A673 (cell line): ENCODE measurements at regions of chr12 and their contacts with region 1.

Region 1: GRCh38 chr12:111942557-111942956 is 70.4 kb downstream of the TMEM116 start:
- DNase-seq: no peak
- H3K4me3 ChIP-seq: no peak overlapping the region
- H3K27ac ChIP-seq: no peak overlapping the region
- H3K4me1 ChIP-seq: no peaks in the 10 kb centered on the region
- H3K27me3 ChIP-seq: no peaks in the 10 kb centered on the region
- CTCF ChIP-seq: no peak

Region 2: DNA sequence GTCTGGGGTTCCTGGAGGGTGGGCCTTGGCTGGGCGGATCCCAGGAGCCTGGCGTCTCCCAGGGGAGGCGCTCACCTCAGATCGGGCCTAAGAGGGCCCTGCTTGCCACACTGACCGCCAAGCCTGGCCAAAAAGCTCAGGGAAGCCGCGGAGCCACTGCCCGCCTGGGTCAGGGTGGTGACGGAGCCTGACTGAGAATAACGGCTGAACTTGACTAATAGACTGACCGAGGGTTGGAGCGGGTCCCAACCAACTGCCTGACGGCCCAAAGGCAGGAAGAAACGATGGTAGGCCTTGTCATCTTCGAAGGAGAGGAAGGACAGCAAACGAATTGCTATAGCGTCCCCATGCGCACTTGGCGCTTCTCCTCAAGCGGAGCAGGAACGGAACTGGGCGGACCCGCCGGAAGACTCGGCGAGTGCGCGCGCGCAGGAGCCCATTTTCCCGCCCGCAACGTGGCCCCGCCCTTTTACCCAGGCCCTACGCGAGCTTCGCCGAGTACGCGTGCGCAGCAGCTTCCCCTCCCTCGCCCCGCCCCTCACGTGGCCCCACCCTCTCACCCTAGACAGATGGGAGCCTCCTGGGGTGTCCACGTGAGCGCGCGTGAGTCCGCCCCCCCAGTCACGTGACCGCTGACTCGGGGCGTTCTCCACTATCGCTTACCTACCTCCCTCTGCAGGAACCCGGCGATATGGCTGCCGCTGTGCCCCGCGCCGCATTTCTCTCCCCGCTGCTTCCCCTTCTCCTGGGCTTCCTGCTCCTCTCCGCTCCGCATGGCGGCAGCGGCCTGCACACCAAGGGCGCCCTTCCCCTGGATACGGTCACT is 70.4 kb after region 1 on chr12 and contains the starts of genes ERP29 and TMEM116:
- CTCF ChIA-PET with region 1: interaction called, 14 read pairs
- POLR2A ChIA-PET with region 1: interaction called, 10 read pairs
- intact Hi-C with region 1: loop called (anchors 5 kb)
- DNase-seq: peak; percentile 99
- H3K4me3 ChIP-seq: peak within 1 kb of the TSS; percentile 82
- H3K27ac ChIP-seq: peak within 1 kb of the TSS; percentile 96
- H3K4me1 ChIP-seq: peaks cover 16% of the 10 kb centered on the region
- H3K27me3 ChIP-seq: no peaks in the 10 kb centered on the region
- CTCF ChIP-seq: peak; percentile 55
- total RNA-seq, gene ERP29: 109 and 116 TPM in 2 replicates
- total RNA-seq, gene TMEM116: 12.0 and 13.6 TPM in 2 replicates

Region 3: GRCh38 chr12:112167718-112168525 is 225.4 kb after region 1 on chr12:
- CTCF ChIA-PET with region 1: no interaction called
- POLR2A ChIA-PET with region 1: interaction called, 18 read pairs
- intact Hi-C with region 1: no loop called
- DNase-seq: no peak
- H3K4me3 ChIP-seq: no peak overlapping the region
- H3K27ac ChIP-seq: no peak overlapping the region
- H3K4me1 ChIP-seq: no peaks in the 10 kb centered on the region
- H3K27me3 ChIP-seq: no peaks in the 10 kb centered on the region
- CTCF ChIP-seq: no peak

Region 4: DNA sequence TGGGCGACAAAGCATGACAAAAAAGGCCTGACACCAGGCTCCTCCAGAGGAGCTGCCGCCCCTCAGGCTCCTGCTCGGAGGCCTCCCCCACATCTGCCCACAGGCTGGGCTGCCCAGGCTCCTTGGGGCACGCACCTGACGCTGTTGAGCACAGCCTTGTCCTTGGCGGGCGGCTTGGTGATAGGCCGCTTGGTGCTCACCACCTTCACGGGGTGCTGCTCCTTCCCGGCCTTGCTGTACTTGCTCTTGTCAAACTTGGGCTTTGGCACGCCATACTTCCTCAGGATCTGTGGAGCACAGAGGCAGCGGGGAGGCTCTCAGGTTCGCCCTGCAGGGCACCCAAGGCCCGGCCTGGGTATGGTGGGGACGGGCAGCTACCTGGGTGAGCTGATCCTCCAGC is 236.2 kb after region 1 on chr12:
- CTCF ChIA-PET with region 1: no interaction called
- POLR2A ChIA-PET with region 1: no interaction called
- intact Hi-C with region 1: no loop called
- DNase-seq: no peak
- H3K4me3 ChIP-seq: no peak overlapping the region
- H3K27ac ChIP-seq: no peak overlapping the region
- H3K4me1 ChIP-seq: no peaks in the 10 kb centered on the region
- H3K27me3 ChIP-seq: no peaks in the 10 kb centered on the region
- CTCF ChIP-seq: no peak